ENCODE measurements at regions of chr2 and their contacts with region 1.

Region 1: GRCh38 chr2:188596054-188596453 is 304.4 kb downstream of the GULP1 start:
- DNase-seq: no peak
- ATAC-seq: no peak
- H3K4me3 ChIP-seq: no peak overlapping the region
- H3K27ac ChIP-seq: no peak overlapping the region
- H3K4me1 ChIP-seq: no peaks in the 10 kb centered on the region
- H3K27me3 ChIP-seq: no peaks in the 10 kb centered on the region
- CTCF ChIP-seq: no peak
- EP300 ChIP-seq: no peak
- POLR2A ChIP-seq: no peak
- RAD21 ChIP-seq: no peak

Region 2: GRCh38 chr2:188571543-188572303 is 24.3 kb before region 1 on chr2:
- CTCF ChIA-PET with region 1: no interaction called
- POLR2A ChIA-PET with region 1: no interaction called
- in situ Hi-C with region 1: no loop called
- intact Hi-C with region 1: loop called (anchors 1 kb)
- DNase-seq: no peak
- ATAC-seq: no peak
- H3K4me3 ChIP-seq: no peak overlapping the region
- H3K27ac ChIP-seq: no peak overlapping the region
- H3K4me1 ChIP-seq: no peaks in the 10 kb centered on the region
- H3K27me3 ChIP-seq: no peaks in the 10 kb centered on the region
- CTCF ChIP-seq: no peak
- EP300 ChIP-seq: no peak
- POLR2A ChIP-seq: no peak
- RAD21 ChIP-seq: no peak

Measured in K562 (cell line).